ENCODE measurements at regions of chr2 and their contacts with region 1.

Region 1: GRCh38 chr2:69724540-69725159 is 17.3 kb upstream of the ANXA4 start:
- DNase-seq: peak; percentile 68 to 91 (median 73)
- ATAC-seq: peak; percentile 98
- H3K4me3 ChIP-seq: no peak overlapping the region
- H3K27ac ChIP-seq: no peak overlapping the region
- H3K4me1 ChIP-seq: peaks cover 6 to 7% of the 10 kb centered on the region in 2 experiments; a peak in 3 of 5 replicates
- H3K27me3 ChIP-seq: no peaks in the 10 kb centered on the region; a peak in 1 of 5 replicates
- CTCF ChIP-seq: peak; percentile 84 to 93 (median 93)
- EP300 ChIP-seq: peak; percentile 60
- POLR2A ChIP-seq: no peak
- RAD21 ChIP-seq: peak; percentile 97 to 99

Region 2: GRCh38 chr2:68734688-68735525 is 989.7 kb before region 1 on chr2 and contains the start of gene ARHGAP25:
- CTCF ChIA-PET with region 1: no interaction called
- POLR2A ChIA-PET with region 1: no interaction called
- in situ Hi-C with region 1: no loop called
- intact Hi-C with region 1: no loop called
- DNase-seq: no peak
- ATAC-seq: no peak
- H3K4me3 ChIP-seq: no peak within 1 kb of the TSS
- H3K27ac ChIP-seq: no peak within 1 kb of the TSS
- H3K4me1 ChIP-seq: peaks cover 0 to 8% of the 10 kb centered on the region in 2 experiments; a peak in 4 of 5 replicates
- H3K27me3 ChIP-seq: no peaks in the 10 kb centered on the region
- CTCF ChIP-seq: no peak
- EP300 ChIP-seq: no peak
- POLR2A ChIP-seq: no peak
- RAD21 ChIP-seq: no peak
- polyA plus RNA-seq, gene ARHGAP25: 4.9 to 6.8 TPM

Region 3: DNA sequence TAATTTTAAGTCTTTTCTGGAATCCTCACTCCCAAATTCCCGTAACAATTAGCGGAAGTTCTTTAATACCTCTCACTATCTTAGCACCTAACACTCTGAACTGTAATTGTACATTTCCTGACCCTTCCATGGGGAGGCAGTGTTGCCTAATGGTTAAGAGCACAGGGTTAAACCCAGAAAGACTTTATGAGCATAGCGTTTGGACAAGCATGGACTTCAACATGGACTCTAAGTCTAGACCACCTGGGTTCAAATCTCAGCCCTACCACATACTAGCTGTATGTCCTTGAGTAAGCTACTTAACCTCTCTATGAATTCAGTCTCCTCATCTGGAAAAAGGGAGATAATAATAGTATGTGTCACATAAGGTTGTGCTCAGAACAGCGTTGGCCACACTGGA is 698.6 kb before region 1 on chr2:
- CTCF ChIA-PET with region 1: no interaction called
- POLR2A ChIA-PET with region 1: no interaction called
- in situ Hi-C with region 1: loop called (anchors 25 kb)
- intact Hi-C with region 1: loop called (anchors 10 kb)
- DNase-seq: peak; percentile 39 to 68 (median 51)
- ATAC-seq: peak; percentile 92
- H3K4me3 ChIP-seq: no peak overlapping the region
- H3K27ac ChIP-seq: no peak overlapping the region
- H3K4me1 ChIP-seq: no peaks in the 10 kb centered on the region
- H3K27me3 ChIP-seq: no peaks in the 10 kb centered on the region
- CTCF ChIP-seq: peak; percentile 58 to 83 (median 67)
- EP300 ChIP-seq: no peak
- POLR2A ChIP-seq: no peak
- RAD21 ChIP-seq: peak; percentile 93 to 95

Region 4: DNA sequence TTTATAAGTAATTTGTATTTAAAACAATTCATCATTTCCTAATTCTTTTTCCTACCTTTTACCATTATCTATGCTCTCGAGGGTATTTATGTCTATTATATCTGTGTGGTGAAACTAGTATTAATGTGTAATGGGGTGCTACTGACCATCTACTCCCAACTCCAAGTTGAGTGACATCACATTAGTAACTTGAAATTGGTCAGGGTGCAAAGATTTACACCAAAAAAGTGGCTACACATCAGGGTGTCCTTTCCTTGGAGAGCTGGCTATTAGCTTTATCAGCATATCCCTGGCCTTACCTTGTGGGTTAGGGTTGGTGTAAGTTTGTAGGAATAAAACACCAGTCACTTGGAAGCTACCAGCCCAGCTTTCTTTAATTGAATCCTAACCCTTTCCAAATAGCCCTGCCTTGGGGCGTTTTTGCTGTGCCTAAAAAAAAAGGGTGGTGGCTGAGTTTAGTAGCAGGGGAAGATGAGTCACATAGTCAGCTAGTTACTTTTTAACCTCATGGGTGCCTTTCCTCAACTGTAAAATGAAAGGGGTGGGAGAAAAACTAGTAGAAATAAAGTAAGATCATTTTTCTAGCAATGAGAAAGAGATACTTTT is 31.3 kb after region 1 on chr2:
- CTCF ChIA-PET with region 1: no interaction called
- POLR2A ChIA-PET with region 1: no interaction called
- in situ Hi-C with region 1: no loop called
- intact Hi-C with region 1: no loop called
- DNase-seq: peak in 1 of 4 experiments; percentile 36
- ATAC-seq: peak; percentile 59; the same call in 2 of the 3 replicates
- H3K4me3 ChIP-seq: no peak overlapping the region
- H3K27ac ChIP-seq: no peak overlapping the region
- H3K4me1 ChIP-seq: peaks cover 0 to 5% of the 10 kb centered on the region in 2 experiments; a peak in 2 of 5 replicates
- H3K27me3 ChIP-seq: no peaks in the 10 kb centered on the region
- CTCF ChIP-seq: no peak
- EP300 ChIP-seq: no peak
- POLR2A ChIP-seq: no peak
- RAD21 ChIP-seq: no peak

Region 5: GRCh38 chr2:69816923-69817542 is 92.4 kb after region 1 on chr2:
- CTCF ChIA-PET with region 1: interaction called, 28 read pairs
- POLR2A ChIA-PET with region 1: interaction called, 9 read pairs
- in situ Hi-C with region 1: no loop called
- intact Hi-C with region 1: loop called (anchors 1 kb)
- DNase-seq: peak; percentile 61 to 87 (median 64)
- ATAC-seq: peak; percentile 84
- H3K4me3 ChIP-seq: no peak overlapping the region
- H3K27ac ChIP-seq: no peak overlapping the region
- H3K4me1 ChIP-seq: peaks cover 10 to 15% of the 10 kb centered on the region in 2 experiments; a peak in 4 of 5 replicates
- H3K27me3 ChIP-seq: no peaks in the 10 kb centered on the region
- CTCF ChIP-seq: peak; percentile 79 to 84 (median 80)
- EP300 ChIP-seq: no peak
- POLR2A ChIP-seq: no peak
- RAD21 ChIP-seq: peak; percentile 82 to 88

Region 6: DNA sequence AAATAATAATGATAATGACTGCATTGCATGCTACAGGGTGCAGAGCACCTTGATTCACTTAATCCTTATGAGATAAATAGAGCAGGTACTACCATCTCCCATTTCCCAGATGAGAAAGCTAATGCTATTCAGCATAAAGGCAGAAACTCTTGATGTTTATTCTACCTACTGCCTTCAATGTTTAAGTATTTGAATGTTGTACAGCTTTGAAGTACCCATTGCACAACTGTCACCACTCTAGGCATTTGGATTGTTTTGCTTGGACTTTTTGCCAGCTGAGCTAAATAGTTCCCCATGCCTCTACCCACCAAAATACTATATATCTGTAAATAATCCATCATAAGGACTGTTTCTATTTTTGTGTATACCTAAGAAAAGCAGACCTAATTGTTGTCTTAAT is 182.6 kb after region 1 on chr2:
- CTCF ChIA-PET with region 1: interaction called, 3 read pairs
- POLR2A ChIA-PET with region 1: no interaction called
- in situ Hi-C with region 1: loop called (anchors 5 kb)
- intact Hi-C with region 1: loop called (anchors 2 kb)
- DNase-seq: no peak
- ATAC-seq: no peak
- H3K4me3 ChIP-seq: no peak overlapping the region
- H3K27ac ChIP-seq: no peak overlapping the region
- H3K4me1 ChIP-seq: peaks cover 2 to 7% of the 10 kb centered on the region in 2 experiments; a peak in 4 of 5 replicates
- H3K27me3 ChIP-seq: no peaks in the 10 kb centered on the region
- CTCF ChIP-seq: no peak
- EP300 ChIP-seq: no peak
- POLR2A ChIP-seq: no peak
- RAD21 ChIP-seq: no peak

Region 7: GRCh38 chr2:70132244-70133126 is 407.8 kb after region 1 on chr2:
- CTCF ChIA-PET with region 1: no interaction called
- POLR2A ChIA-PET with region 1: no interaction called
- in situ Hi-C with region 1: loop called (anchors 10 kb)
- intact Hi-C with region 1: no loop called
- DNase-seq: peak in 1 of 4 experiments; percentile 64
- ATAC-seq: peak; percentile 47
- H3K4me3 ChIP-seq: peak overlapping the region; percentile 2; the same call in 1 of the 2 replicates
- H3K27ac ChIP-seq: peak overlapping the region; percentile 95
- H3K4me1 ChIP-seq: peaks cover 33 to 62% of the 10 kb centered on the region in 2 experiments
- H3K27me3 ChIP-seq: no peaks in the 10 kb centered on the region
- CTCF ChIP-seq: no peak
- EP300 ChIP-seq: no peak
- POLR2A ChIP-seq: peak; percentile 62
- RAD21 ChIP-seq: no peak